CD14-positive monocyte (primary cell): ENCODE measurements at regions of chr2 and their contacts with region 1.

Region 1: DNA sequence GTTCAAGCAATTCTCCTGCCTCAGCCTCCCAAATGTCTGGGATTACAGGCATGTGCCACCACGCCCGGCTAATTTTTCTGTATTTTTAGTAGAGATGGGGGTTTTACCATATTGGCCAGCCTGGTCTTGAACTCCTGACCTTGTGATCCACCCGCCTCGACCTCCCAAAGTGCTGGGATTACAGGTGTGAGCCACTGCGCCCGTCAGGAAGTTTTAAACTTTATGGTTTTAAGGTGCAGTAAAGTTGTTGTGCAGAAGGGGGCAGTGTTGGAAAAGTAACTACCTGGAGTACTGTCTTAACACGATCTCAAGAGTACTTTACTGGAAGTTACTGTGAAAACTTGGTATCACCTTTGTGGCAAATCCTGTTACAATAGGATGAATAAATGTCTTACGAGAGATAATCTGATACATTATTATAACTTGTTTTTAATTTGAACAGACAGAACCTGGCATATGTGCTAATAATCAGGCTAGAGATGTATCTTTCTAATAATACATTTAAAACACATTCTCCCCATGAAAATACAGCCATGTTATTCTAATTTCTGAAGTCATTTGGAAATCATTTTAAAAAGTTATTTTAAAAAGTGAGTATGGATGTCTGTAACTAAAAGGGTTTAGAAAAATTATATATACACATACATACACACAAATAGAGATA is 10.8 kb downstream of the SPDYA start:
- DNase-seq: peak; percentile 28 to 56 (median 50)
- H3K4me3 ChIP-seq: no peak overlapping the region
- H3K4me3 Mint-ChIP-seq: no peak overlapping the region
- H3K27ac ChIP-seq: no peak overlapping the region
- H3K27ac Mint-ChIP-seq: no peak overlapping the region
- H3K4me1 ChIP-seq: no peaks in the 10 kb centered on the region
- H3K4me1 Mint-ChIP-seq: peaks cover 1% of the 10 kb centered on the region
- H3K27me3 ChIP-seq: no peaks in the 10 kb centered on the region
- H3K27me3 Mint-ChIP-seq: peaks cover 1 to 5% (median 3%) of the 10 kb centered on the region in 3 donors
- CTCF ChIP-seq: peak; percentile 78

Region 2: GRCh38 chr2:28764909-28765711 is 56.3 kb before region 1 on chr2:
- intact Hi-C with region 1: no loop called
- DNase-seq: no peak
- H3K4me3 ChIP-seq: no peak overlapping the region
- H3K4me3 Mint-ChIP-seq: no peak overlapping the region
- H3K27ac ChIP-seq: peak overlapping the region in 1 of 2 donors; percentile 10
- H3K27ac Mint-ChIP-seq: peak overlapping the region in 2 of 7 donors; percentile 48 to 61
- H3K4me1 ChIP-seq: peaks cover 13 to 27% of the 10 kb centered on the region in 2 donors
- H3K4me1 Mint-ChIP-seq: peaks cover 30% of the 10 kb centered on the region
- H3K27me3 ChIP-seq: no peaks in the 10 kb centered on the region
- H3K27me3 Mint-ChIP-seq: no peaks in the 10 kb centered on the region
- CTCF ChIP-seq: no peak

Region 3: GRCh38 chr2:28894470-28895177 is 73.2 kb after region 1 on chr2 and contains the start of gene WDR43:
- intact Hi-C with region 1: loop called in 1 of 2 experiments (anchors 10 kb)
- DNase-seq: peak; percentile 98 to 99 (median 98)
- H3K4me3 ChIP-seq: peak within 1 kb of the TSS; percentile 88 to 99 (median 91)
- H3K4me3 Mint-ChIP-seq: peak within 1 kb of the TSS; percentile 89 to 98
- H3K27ac ChIP-seq: peak within 1 kb of the TSS; percentile 71 to 92
- H3K27ac Mint-ChIP-seq: peak within 1 kb of the TSS; percentile 84 to 96 (median 90)
- H3K4me1 ChIP-seq: peaks cover 19 to 39% of the 10 kb centered on the region in 2 donors
- H3K4me1 Mint-ChIP-seq: peaks cover 37% of the 10 kb centered on the region
- H3K27me3 ChIP-seq: no peaks in the 10 kb centered on the region
- H3K27me3 Mint-ChIP-seq: peaks cover 0 to 2% (median 0%) of the 10 kb centered on the region in 3 donors
- CTCF ChIP-seq: no peak
- polyA plus RNA-seq, gene WDR43: 12.2 to 19.2 (median 16.1) TPM

Region 4: GRCh38 chr2:28904802-28905499 is 83.5 kb after region 1 on chr2:
- intact Hi-C with region 1: no loop called
- DNase-seq: no peak
- H3K4me3 ChIP-seq: no peak overlapping the region
- H3K4me3 Mint-ChIP-seq: no peak overlapping the region
- H3K27ac ChIP-seq: no peak overlapping the region
- H3K27ac Mint-ChIP-seq: peak overlapping the region in 3 of 7 donors; percentile 30 to 61 (median 40)
- H3K4me1 ChIP-seq: peaks cover 0 to 9% of the 10 kb centered on the region in 2 donors
- H3K4me1 Mint-ChIP-seq: peaks cover 8% of the 10 kb centered on the region
- H3K27me3 ChIP-seq: no peaks in the 10 kb centered on the region
- H3K27me3 Mint-ChIP-seq: no peaks in the 10 kb centered on the region
- CTCF ChIP-seq: no peak

Region 5: DNA sequence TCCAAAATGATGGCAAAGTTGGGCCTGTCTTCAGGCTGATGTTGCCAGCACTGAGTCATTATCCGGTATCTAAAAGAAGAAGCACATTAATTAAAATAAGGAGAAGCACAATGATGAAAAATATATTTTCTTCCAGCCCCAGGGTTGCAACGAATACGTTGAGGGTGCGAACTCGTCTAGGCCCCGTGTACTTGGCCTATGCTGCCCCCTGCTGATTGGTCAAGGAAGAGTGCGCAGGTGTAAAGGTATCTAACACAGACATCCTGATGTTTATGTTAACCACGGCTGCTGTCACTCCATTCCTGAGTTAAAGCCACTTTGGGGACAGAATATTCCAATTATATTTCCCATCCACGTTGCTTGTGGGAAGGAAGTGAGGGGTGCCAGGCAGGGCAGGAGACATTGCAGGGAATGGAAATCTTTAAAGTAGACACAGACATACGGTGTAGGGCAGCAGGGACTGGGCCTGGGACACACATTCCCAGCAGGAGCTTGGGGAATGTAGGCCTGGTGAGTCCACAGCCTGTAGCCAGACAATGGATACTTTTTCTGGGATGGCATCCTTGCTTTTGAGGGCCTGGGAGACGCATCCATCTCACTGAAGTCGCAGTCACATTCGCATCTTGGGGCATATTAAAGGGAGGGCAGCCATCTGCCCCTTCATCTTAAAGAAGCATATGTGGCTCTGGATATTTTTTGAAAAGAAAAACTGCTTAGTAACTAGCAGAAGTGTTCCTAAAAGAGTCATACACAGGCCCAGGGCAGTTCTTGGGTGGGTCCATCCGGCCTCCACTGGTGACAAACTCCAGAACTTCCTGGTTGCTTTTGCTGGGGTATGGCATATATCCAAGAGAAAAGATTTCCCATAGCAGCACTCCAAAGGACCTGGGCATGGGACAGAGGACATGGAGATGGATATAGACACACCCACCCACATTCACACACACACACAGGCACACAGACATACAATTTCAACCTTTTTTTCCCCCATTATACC is 375.7 kb after region 1 on chr2:
- intact Hi-C with region 1: loop called (anchors 5 kb)
- DNase-seq: peak; percentile 49 to 61 (median 55)
- H3K4me3 ChIP-seq: no peak overlapping the region
- H3K4me3 Mint-ChIP-seq: no peak overlapping the region
- H3K27ac ChIP-seq: no peak overlapping the region
- H3K27ac Mint-ChIP-seq: no peak overlapping the region
- H3K4me1 ChIP-seq: peaks cover 8 to 9% of the 10 kb centered on the region in 2 donors
- H3K4me1 Mint-ChIP-seq: peaks cover 13% of the 10 kb centered on the region
- H3K27me3 ChIP-seq: no peaks in the 10 kb centered on the region
- H3K27me3 Mint-ChIP-seq: peaks cover 0 to 1% (median 0%) of the 10 kb centered on the region in 3 donors
- CTCF ChIP-seq: peak; percentile 88